ENCODE measurements at regions of chr21 and their contacts with region 1.

Region 1: GRCh38 chr21:45129189-45129923 is 55.0 kb downstream of the ADARB1 start:
- DNase-seq: no peak
- H3K4me3 ChIP-seq: no peak overlapping the region
- CTCF ChIP-seq: no peak
- POLR2A ChIP-seq: no peak

Region 2: GRCh38 chr21:44949779-44950198 is 179.6 kb before region 1 on chr21:
- intact Hi-C with region 1: loop called (anchors 5 kb)
- DNase-seq: peak; percentile 81 to 97
- H3K4me3 ChIP-seq: no peak overlapping the region
- CTCF ChIP-seq: peak in 1 of 3 donors; percentile 76
- POLR2A ChIP-seq: no peak

Region 3: DNA sequence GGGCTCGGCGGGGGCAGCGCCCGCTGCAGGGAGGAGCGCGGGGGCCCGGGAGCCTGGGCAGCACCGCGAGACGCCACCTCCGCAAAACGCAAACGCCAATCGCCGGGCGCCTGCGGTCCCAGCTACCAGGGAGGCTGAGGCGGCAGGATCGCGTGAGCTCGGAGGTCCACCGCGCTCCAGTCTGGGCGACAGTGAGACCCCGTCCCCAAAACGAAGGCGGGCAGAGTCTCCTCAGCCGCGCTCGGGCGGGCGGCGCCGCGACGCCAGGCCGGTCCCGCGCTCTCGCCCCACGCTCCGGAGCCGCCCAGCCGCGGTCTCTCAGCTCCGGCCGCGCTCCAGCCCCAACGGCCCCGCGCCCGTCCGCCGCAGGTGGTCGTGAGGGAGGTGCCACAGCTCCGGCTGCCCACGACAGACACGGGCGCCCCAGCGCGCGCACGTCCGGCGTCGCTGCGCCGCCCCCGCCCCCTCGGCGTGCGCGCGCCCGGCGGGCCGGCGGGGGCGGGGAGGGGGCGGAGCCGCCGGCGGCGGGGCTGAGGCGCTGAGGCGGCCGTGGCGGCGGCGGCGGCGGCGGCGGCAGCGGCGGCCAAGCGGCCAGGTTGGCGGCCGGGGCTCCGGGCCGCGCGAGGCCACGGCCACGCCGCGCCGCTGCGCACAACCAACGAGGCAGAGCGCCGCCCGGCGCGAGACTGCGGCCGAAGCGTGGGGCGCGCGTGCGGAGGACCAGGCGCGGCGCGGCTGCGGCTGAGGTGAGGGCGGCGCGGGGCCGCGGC is 55.1 kb before region 1 on chr21 and contains the start of gene ADARB1:
- intact Hi-C with region 1: loop called (anchors 10 kb)
- DNase-seq: peak in 1 of 2 donors; percentile 88
- H3K4me3 ChIP-seq: peak within 1 kb of the TSS; percentile 90
- CTCF ChIP-seq: no peak
- POLR2A ChIP-seq: no peak
- total RNA-seq, gene ADARB1: 14.6 to 21.9 (median 16.6) TPM

Region 4: GRCh38 chr21:45266518-45267389 is 137.4 kb after region 1 on chr21:
- intact Hi-C with region 1: no loop called
- DNase-seq: peak in 1 of 2 donors; percentile 74
- H3K4me3 ChIP-seq: no peak overlapping the region
- CTCF ChIP-seq: no peak
- POLR2A ChIP-seq: no peak

Region 5: DNA sequence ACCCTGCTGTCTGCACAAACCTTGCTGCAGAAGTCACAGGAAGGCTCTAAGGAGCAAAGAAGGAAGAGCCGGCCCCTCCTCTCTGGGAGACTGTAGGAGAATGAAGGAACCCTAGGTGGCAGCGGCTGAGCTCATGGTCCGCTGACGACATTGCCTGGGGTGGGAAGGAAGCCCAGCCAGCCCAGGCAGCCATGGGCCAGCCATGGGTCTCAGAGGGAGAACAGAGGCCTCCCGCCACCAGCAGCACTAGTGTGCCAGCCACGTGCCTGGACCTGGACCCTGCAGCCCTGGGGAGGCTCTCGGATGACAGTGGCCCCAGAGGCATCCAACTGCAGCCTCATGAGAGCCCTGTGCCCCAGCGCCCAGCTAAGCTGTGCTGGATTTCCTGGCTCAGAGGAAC is 207.5 kb after region 1 on chr21:
- intact Hi-C with region 1: no loop called
- DNase-seq: no peak
- H3K4me3 ChIP-seq: no peak overlapping the region
- CTCF ChIP-seq: no peak
- POLR2A ChIP-seq: no peak